Heart left ventricle (tissue), 16 donors: ENCODE measurements at regions of chr3 and their contacts with region 1.

Region 1: GRCh38 chr3:130014526-130014925 is 40.0 kb downstream of the TRH start:
- DNase-seq: no peak
- ATAC-seq: no peak
- H3K4me3 ChIP-seq: no peak overlapping the region
- H3K27ac ChIP-seq: no peak overlapping the region
- H3K4me1 ChIP-seq: no peaks in the 10 kb centered on the region
- H3K27me3 ChIP-seq: peaks cover 0 to 4% (median 0%) of the 10 kb centered on the region in 9 donors
- CTCF ChIP-seq: no peak
- POLR2A ChIP-seq: no peak

Region 2: DNA sequence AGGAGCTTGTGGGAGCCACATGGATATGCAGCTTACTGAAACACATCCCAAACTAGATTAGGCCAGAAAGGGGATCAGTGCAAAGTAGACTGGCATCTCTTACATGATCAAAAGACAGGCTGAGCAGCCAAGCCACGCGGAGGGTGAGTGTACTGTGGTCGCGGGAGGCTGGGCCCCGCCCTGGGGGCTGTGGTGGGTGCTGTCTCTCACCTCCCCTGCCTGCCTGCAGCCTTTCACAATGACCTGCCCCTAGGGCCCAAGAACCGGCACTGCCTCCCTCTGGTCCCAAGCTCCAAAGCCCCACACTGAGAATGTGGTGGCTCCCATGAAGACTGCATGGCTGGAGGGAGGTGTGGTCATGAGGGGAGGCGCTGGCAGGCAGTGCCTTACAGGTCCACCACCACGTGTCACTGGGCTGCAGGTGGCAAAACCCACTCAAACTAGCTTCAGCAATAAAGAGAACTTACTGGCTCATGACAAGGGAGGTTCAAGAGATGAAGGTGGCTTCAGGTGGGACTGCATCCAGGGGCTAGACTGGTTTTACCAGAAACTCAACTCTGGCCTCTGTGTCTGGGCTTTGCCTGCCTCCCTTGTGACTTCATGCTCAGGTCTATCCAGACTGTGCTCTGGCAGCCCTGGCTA is 380.7 kb before region 1 on chr3:
- intact Hi-C with region 1: loop called in 1 of 10 experiments (anchors 10 kb)
- DNase-seq: no peak
- ATAC-seq: no peak
- H3K4me3 ChIP-seq: no peak overlapping the region
- H3K27ac ChIP-seq: no peak overlapping the region
- H3K4me1 ChIP-seq: peaks cover 0 to under 1% (median 0%) of the 10 kb centered on the region in 12 donors
- H3K27me3 ChIP-seq: no peaks in the 10 kb centered on the region
- CTCF ChIP-seq: no peak
- POLR2A ChIP-seq: no peak

Region 3: GRCh38 chr3:129927072-129927471 is 87.5 kb before region 1 on chr3:
- intact Hi-C with region 1: no loop called
- DNase-seq: no peak
- ATAC-seq: no peak
- H3K4me3 ChIP-seq: no peak overlapping the region
- H3K27ac ChIP-seq: no peak overlapping the region
- H3K4me1 ChIP-seq: no peaks in the 10 kb centered on the region
- H3K27me3 ChIP-seq: no peaks in the 10 kb centered on the region
- CTCF ChIP-seq: no peak
- POLR2A ChIP-seq: no peak